ENCODE measurements at regions of chr1 and their contacts with region 1.

Region 1: GRCh38 chr1:178238722-178239510 is 145.0 kb downstream of the RASAL2 start:
- DNase-seq: peak; percentile 100
- H3K4me3 Mint-ChIP-seq: peak overlapping the region; percentile 57
- H3K27ac Mint-ChIP-seq: peak overlapping the region; percentile 96
- H3K4me1 Mint-ChIP-seq: peaks cover 69% of the 10 kb centered on the region
- H3K27me3 Mint-ChIP-seq: no peaks in the 10 kb centered on the region
- CTCF ChIP-seq: no peak

Region 2: DNA sequence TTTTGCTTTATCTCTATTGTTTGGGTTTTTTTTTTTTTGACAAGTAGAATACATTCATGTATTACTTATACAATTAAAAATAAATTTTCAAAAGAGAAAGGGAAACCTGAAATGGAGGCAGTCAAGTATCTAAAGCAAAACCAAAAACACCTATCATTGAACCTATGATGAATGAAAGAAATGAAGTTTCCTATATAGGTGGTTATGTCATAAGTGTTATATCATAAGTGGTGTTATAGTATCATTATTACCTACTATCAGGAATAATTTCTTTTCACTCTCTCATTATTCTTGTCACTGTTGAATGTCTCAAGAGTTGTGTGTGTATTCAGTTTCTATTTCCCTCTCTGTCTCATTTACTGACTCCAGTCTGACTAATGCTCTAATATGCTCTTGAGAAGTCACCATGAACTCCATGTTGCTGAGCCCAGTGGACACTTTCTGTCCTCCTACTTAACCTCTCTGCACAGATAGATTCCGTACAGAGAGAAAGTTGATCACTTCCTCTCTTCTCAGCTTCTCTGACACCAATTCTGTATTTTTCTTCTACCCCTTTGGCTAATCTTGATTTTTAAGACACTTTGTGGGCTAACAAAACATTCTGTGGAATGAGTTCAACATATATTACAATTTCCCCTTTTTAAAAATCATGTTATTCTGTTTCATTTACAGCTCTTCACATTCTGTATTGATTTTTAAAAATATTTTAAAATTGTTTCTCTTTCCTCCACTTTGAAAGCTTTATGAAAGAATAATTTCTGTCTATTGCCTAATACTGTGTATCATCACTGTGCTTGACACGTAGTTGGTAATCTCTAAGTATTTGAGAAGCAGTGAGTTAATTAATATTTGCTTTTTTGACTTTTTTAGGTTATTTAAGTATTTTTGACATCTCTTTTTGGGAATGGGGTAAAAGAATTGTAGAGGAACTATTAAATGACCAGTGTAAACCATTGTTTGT is 94.9 kb before region 1 on chr1:
- CTCF ChIA-PET with region 1: no interaction called
- POLR2A ChIA-PET with region 1: no interaction called
- intact Hi-C with region 1: no loop called
- DNase-seq: peak; percentile 48
- H3K4me3 Mint-ChIP-seq: no peak overlapping the region
- H3K27ac Mint-ChIP-seq: peak overlapping the region; percentile 83
- H3K4me1 Mint-ChIP-seq: peaks cover 36% of the 10 kb centered on the region
- H3K27me3 Mint-ChIP-seq: no peaks in the 10 kb centered on the region
- CTCF ChIP-seq: no peak

Region 3: DNA sequence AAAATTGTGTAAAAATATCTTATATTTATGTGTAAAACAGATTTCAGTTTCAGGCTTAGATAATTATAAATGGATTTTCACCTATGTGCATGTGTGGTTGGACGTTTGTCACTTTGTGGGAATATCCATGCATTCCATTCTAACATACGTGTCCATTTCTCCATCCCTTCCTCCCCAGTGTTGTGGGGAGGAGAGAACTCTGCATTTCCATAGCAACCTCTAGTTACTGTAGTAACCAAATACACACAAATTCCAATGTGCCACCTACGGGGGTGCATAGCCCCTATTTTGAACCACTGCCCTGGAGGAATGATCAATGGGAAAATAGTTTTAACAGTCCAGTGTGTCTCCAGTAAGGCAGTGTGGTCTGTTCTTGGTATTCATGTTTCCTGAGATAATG is 66.0 kb before region 1 on chr1:
- CTCF ChIA-PET with region 1: no interaction called
- POLR2A ChIA-PET with region 1: interaction called, 5 read pairs
- intact Hi-C with region 1: loop called (anchors 2 kb)
- DNase-seq: peak; percentile 81
- H3K4me3 Mint-ChIP-seq: no peak overlapping the region
- H3K27ac Mint-ChIP-seq: peak overlapping the region; percentile 88
- H3K4me1 Mint-ChIP-seq: peaks cover 46% of the 10 kb centered on the region
- H3K27me3 Mint-ChIP-seq: no peaks in the 10 kb centered on the region
- CTCF ChIP-seq: no peak

Region 4: DNA sequence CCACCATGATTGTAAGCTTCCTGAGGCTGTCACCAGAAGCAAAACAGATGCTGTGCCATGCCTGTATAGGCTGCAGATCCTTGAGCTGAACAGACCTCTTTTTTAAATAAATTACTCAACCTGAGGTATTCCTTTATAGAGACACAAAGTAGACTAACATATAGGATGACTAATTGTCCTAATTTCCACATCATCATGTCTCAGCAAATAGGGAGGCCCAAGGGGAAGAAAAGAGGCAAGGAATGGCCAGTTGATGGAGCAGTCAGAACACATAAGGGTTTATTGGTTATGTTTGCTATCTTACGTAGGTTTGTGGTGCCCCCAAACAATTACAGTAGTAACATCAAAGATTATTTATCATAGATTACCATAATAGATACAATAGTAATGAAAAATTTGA is 18.8 kb before region 1 on chr1:
- CTCF ChIA-PET with region 1: interaction called, 8 read pairs
- POLR2A ChIA-PET with region 1: interaction called, 20 read pairs
- intact Hi-C with region 1: no loop called
- DNase-seq: peak; percentile 76
- H3K4me3 Mint-ChIP-seq: no peak overlapping the region
- H3K27ac Mint-ChIP-seq: peak overlapping the region; percentile 17
- H3K4me1 Mint-ChIP-seq: peaks cover 36% of the 10 kb centered on the region
- H3K27me3 Mint-ChIP-seq: no peaks in the 10 kb centered on the region
- CTCF ChIP-seq: no peak

Region 5: DNA sequence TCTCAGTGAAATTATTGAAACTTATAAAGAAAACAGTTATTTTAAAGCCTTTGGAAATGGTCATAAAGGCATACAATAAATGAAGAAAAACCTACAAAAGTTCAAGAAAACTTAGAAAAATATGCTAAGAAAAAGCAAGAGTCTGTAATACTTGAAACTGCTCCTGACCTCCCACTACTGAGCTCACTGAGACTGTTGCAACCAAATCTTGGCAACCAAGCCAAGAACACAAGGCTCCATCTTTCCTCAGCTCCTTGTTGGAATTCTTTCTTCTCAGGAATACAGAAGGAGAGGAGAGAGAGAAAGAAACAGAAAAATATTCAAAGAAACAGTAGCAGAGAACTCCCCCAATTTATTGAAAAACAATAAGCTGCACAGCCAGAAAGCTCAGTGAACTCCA is 15.5 kb after region 1 on chr1:
- CTCF ChIA-PET with region 1: interaction called, 11 read pairs
- POLR2A ChIA-PET with region 1: interaction called, 21 read pairs
- intact Hi-C with region 1: no loop called
- DNase-seq: peak; percentile 31
- H3K4me3 Mint-ChIP-seq: no peak overlapping the region
- H3K27ac Mint-ChIP-seq: no peak overlapping the region
- H3K4me1 Mint-ChIP-seq: no peaks in the 10 kb centered on the region
- H3K27me3 Mint-ChIP-seq: no peaks in the 10 kb centered on the region
- CTCF ChIP-seq: no peak